Uterus (tissue), 4 donors: ENCODE measurements at regions of chr12 and their contacts with region 1.

Region 1: DNA sequence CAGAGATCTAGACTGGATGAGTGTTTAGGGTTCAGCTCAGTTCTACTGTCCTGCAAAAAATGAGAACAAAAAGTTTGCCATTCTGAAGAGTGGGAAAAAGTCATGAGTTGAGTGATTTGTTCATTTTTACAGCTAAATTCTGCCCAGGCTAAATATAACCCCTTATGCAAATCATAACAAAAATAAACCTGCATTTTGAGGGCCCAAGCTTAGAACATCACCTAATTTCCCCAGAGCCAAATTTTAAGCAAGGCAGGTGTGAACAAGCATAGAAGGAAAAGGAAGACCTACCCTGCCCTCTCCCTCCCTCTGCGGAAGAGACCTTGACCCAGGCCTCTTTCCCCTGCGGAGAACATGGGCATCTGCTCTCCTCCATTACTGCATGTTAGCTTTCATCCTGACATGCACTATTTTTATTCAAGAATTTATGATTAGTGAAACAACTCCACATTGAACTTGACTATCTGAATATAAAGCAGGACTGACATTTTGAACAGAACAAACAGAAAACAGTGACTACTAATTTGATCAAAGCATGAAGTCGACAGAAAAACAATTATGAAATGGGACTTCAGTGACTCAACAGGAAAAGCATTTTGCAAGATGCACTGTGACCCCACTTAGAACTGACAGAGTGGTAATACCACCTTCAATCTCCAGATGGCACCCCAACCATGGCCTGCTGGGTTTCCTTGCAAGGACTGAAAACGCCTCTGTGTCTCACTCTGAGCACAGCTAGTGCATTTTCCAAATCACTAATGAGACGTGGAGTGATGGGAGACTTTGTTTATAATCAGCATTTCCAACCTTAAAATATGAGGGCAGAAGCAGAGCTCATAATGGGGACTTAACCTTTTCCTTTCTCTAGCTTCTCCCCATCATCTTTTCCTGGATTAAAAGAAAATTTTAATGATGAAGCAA is 30.9 kb upstream of the SELPLG start:
- DNase-seq: peak; percentile 85 to 95
- H3K4me3 ChIP-seq: no peak overlapping the region
- H3K27ac ChIP-seq: peak overlapping the region; percentile 86 to 90
- H3K4me1 ChIP-seq: peaks cover 18 to 20% of the 10 kb centered on the region in 2 donors
- H3K27me3 ChIP-seq: no peaks in the 10 kb centered on the region
- CTCF ChIP-seq: peak; percentile 87 to 98 (median 95)
- POLR2A ChIP-seq: peak in 1 of 2 donors; percentile 6

Region 2: GRCh38 chr12:108731105-108731865 is 66.7 kb after region 1 on chr12 and contains the start of gene CORO1C:
- intact Hi-C with region 1: loop called (anchors 10 kb)
- DNase-seq: peak; percentile 93 to 96
- H3K4me3 ChIP-seq: peak within 1 kb of the TSS; percentile 64 to 87
- H3K27ac ChIP-seq: peak within 1 kb of the TSS; percentile 96 to 98
- H3K4me1 ChIP-seq: no peaks in the 10 kb centered on the region
- H3K27me3 ChIP-seq: no peaks in the 10 kb centered on the region
- CTCF ChIP-seq: peak; percentile 62 to 91 (median 82)
- POLR2A ChIP-seq: peak; percentile 95 to 99
- total RNA-seq, gene CORO1C: 129 to 357 (median 235) TPM

Region 3: DNA sequence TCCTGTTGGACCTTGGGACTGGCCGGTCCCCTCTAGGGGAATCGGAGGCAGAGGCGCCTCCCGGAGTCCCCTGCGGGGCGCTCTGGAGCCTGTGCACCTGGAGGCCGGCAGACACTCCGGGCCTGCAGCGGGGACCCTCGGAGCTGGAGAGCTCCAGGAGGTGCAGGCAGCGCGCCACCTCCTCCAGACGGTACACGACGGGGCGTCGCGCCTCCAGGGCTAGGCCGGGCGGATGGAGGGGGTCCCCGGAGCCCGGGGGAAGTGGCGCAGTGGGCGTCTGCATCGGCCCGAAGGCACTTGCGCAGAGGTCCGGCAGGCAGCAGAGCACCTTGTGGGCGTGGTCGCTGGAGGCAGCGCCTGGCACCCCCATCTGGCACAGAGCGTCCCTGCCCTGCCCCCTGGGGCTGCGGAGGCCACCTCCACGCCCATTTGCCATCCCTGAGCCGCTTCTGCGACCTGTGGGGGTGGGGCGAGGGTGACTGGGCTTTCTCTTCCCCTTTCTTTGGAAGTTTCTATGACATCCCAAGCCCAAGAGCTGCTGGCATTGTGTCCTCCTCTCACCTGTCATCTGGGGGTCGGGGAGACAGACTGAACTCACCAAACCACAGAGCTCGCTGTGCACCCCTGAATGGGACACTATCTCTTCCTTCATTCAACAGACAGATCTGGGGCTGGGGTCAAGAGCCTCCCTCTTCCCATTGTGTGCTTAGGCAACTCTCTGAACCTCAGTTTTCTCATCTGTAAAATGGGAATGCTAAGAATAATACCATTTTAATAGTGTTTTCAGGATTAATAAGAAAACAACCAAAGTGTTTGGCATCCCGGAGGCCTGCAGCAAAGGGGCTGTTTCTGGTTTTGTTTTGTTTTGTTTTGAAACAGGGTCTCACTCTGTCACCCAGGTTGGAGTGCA is 104.2 kb after region 1 on chr12:
- intact Hi-C with region 1: no loop called
- DNase-seq: no peak
- H3K4me3 ChIP-seq: no peak overlapping the region
- H3K27ac ChIP-seq: peak overlapping the region in 1 of 2 donors; percentile 3
- H3K4me1 ChIP-seq: peaks cover 0 to 10% of the 10 kb centered on the region in 2 donors
- H3K27me3 ChIP-seq: no peaks in the 10 kb centered on the region
- CTCF ChIP-seq: no peak
- POLR2A ChIP-seq: peak in 1 of 2 donors; percentile 19